ENCODE measurements at regions of chr1 and their contacts with region 1.

Region 1: DNA sequence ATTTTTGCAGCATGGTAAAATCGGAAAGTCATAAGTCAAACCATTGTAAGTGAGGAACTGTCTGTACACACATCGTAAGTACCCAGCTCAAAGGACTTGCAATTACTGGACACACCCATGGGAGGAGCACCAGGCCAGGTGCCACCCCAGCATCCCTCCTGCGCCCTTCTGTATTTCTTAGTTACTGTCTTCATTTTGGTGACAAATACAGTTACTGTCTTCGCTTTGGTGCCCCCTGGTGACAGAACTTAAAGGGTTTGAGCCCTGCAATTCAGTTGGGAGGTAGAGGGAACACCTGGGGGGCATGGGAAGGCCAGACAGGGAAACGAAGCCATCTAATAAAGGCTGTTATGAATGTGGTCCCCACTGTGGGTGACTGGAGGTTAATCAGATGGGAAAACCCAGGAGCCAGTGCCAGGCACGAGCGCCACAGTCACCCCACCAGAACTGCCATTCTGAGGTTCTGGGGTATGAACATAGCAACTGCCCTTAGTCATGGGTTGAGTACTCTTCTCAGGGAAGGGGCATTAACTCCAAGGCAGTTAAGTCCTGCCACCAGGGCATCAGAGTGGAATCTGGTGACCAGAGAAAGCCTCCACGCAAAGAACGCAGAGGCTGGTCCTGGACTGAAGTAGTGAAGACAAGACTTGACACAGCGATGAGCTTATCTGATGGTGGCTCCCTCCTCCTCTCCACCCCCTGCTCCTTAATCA is 612.9 kb downstream of the PTPRU start:
- DNase-seq: peak; percentile 28
- H3K4me3 ChIP-seq: no peak overlapping the region
- H3K27ac ChIP-seq: no peak overlapping the region
- H3K4me1 ChIP-seq: no peaks in the 10 kb centered on the region
- H3K27me3 ChIP-seq: peaks cover 13% of the 10 kb centered on the region
- CTCF ChIP-seq: peak; percentile 23 to 47 (median 40)
- EP300 ChIP-seq: no peak
- POLR2A ChIP-seq: no peak

Region 2: DNA sequence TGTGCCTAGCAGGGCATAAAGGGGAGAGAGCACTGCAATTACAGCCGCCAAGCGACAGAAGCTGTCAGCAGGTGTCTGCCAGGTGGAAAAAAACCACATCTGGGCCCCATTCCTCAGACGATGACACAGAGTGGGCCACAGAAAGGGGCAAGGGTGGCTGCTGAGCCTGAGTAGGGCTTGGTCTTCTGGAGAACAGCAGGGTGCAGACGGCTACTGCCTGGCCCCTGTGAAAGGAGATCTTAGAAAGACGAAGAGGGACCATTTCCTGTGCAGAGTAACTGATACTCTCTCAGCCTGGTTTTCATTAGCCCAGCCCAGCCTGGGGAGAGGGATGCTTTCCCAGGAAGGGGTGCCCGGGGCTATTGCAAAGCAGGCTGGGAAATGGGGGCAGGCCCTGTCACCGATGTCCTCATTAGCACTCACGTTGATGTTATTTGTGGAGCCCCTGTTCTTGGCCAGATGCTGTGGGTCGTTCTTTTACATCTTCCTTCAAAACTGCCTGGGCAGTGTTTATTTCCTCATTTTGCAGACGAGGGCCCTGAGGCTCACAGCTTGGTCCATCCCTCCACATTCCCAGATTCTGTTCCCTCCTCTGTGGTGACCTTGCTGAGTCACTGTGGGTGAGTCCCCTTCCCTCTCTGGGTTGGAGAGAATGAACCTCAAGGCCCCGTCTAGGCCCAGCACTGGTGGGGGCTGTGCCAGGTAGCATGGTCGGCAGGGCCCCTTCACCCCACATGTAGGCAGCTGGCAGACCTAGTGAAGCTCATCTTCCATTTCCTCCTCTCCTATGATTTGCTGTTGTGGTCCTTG is 140.1 kb before region 1 on chr1:
- in situ Hi-C with region 1: no loop called
- intact Hi-C with region 1: no loop called
- DNase-seq: no peak
- H3K4me3 ChIP-seq: no peak overlapping the region
- H3K27ac ChIP-seq: no peak overlapping the region
- H3K4me1 ChIP-seq: no peaks in the 10 kb centered on the region
- H3K27me3 ChIP-seq: peaks cover 12% of the 10 kb centered on the region
- CTCF ChIP-seq: no peak
- EP300 ChIP-seq: no peak
- POLR2A ChIP-seq: no peak

Region 3: GRCh38 chr1:29901624-29902325 is 52.6 kb after region 1 on chr1:
- in situ Hi-C with region 1: loop called in 1 of 4 experiments (anchors 10 kb)
- intact Hi-C with region 1: no loop called
- DNase-seq: no peak
- H3K4me3 ChIP-seq: no peak overlapping the region
- H3K27ac ChIP-seq: no peak overlapping the region
- H3K4me1 ChIP-seq: no peaks in the 10 kb centered on the region
- H3K27me3 ChIP-seq: peaks cover 22% of the 10 kb centered on the region
- CTCF ChIP-seq: no peak
- EP300 ChIP-seq: no peak
- POLR2A ChIP-seq: no peak